Activated CD8-positive, alpha-beta T cell treated with anti-CD3 and anti-CD28 coated beads, Interleukin-2, amount 10 ng/mL, durations not matched to agents 7 days and 5 days (primary cell): ENCODE measurements at regions of chr13 and their contacts with region 1.

Region 1: GRCh38 chr13:27362064-27362883 is 62.1 kb upstream of the GTF3A start:
- DNase-seq: peak; percentile 87
- ATAC-seq: peak; percentile 97
- H3K4me3 Mint-ChIP-seq: peak overlapping the region; percentile 68
- H3K27ac Mint-ChIP-seq: peak overlapping the region; percentile 39
- H3K4me1 Mint-ChIP-seq: peaks cover 5% of the 10 kb centered on the region
- H3K27me3 Mint-ChIP-seq: peaks cover 22% of the 10 kb centered on the region

Region 2: GRCh38 chr13:26971990-26972887 is 390.0 kb before region 1 on chr13:
- CTCF ChIA-PET with region 1: interaction called, 19 read pairs
- POLR2A ChIA-PET with region 1: no interaction called
- DNase-seq: peak; percentile 51
- ATAC-seq: peak; percentile 81
- H3K4me3 Mint-ChIP-seq: no peak overlapping the region
- H3K27ac Mint-ChIP-seq: peak overlapping the region; percentile 72
- H3K4me1 Mint-ChIP-seq: peaks cover 3% of the 10 kb centered on the region
- H3K27me3 Mint-ChIP-seq: peaks cover 1% of the 10 kb centered on the region

Region 3: GRCh38 chr13:27161980-27162379 is 200.3 kb before region 1 on chr13:
- CTCF ChIA-PET with region 1: no interaction called
- POLR2A ChIA-PET with region 1: no interaction called
- DNase-seq: no peak
- ATAC-seq: no peak
- H3K4me3 Mint-ChIP-seq: no peak overlapping the region
- H3K27ac Mint-ChIP-seq: no peak overlapping the region
- H3K4me1 Mint-ChIP-seq: peaks cover 40% of the 10 kb centered on the region
- H3K27me3 Mint-ChIP-seq: no peaks in the 10 kb centered on the region

Region 4: GRCh38 chr13:27341616-27342015 is 20.7 kb before region 1 on chr13:
- CTCF ChIA-PET with region 1: interaction called, 11 read pairs
- POLR2A ChIA-PET with region 1: interaction called, 4 read pairs
- DNase-seq: no peak
- ATAC-seq: no peak
- H3K4me3 Mint-ChIP-seq: no peak overlapping the region
- H3K27ac Mint-ChIP-seq: no peak overlapping the region
- H3K4me1 Mint-ChIP-seq: no peaks in the 10 kb centered on the region
- H3K27me3 Mint-ChIP-seq: peaks cover 9% of the 10 kb centered on the region

Region 5: DNA sequence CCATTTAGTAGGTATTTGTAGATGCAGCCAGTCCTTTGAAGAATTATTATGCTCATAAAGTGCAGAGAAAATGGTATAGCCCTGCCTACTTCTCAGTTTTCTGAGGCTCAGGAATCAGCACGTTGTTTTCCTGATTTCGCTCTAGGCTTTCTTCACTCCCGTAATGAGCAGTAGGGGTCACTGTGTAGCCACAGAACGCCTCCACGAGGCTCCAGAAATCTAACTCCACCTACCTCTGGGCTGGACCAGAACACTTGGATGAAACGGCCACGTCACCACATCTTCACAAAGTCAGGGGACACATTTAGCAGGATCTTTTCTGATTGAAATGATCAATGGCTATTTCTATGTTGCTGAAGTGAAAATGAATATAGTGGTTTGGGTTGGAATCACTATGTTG is 12.4 kb after region 1 on chr13:
- CTCF ChIA-PET with region 1: interaction called, 39 read pairs
- POLR2A ChIA-PET with region 1: no interaction called
- DNase-seq: peak; percentile 69
- ATAC-seq: peak; percentile 87
- H3K4me3 Mint-ChIP-seq: no peak overlapping the region
- H3K27ac Mint-ChIP-seq: no peak overlapping the region
- H3K4me1 Mint-ChIP-seq: peaks cover 9% of the 10 kb centered on the region
- H3K27me3 Mint-ChIP-seq: peaks cover 9% of the 10 kb centered on the region

Region 6: GRCh38 chr13:27953676-27954405 is 591.6 kb after region 1 on chr13:
- CTCF ChIA-PET with region 1: interaction called, 11 read pairs
- POLR2A ChIA-PET with region 1: no interaction called
- DNase-seq: peak; percentile 63
- ATAC-seq: peak; percentile 96
- H3K4me3 Mint-ChIP-seq: peak overlapping the region; percentile 69
- H3K27ac Mint-ChIP-seq: no peak overlapping the region
- H3K4me1 Mint-ChIP-seq: peaks cover 19% of the 10 kb centered on the region
- H3K27me3 Mint-ChIP-seq: peaks cover 54% of the 10 kb centered on the region